ENCODE measurements at regions of chr1 and their contacts with region 1.

Region 1: DNA sequence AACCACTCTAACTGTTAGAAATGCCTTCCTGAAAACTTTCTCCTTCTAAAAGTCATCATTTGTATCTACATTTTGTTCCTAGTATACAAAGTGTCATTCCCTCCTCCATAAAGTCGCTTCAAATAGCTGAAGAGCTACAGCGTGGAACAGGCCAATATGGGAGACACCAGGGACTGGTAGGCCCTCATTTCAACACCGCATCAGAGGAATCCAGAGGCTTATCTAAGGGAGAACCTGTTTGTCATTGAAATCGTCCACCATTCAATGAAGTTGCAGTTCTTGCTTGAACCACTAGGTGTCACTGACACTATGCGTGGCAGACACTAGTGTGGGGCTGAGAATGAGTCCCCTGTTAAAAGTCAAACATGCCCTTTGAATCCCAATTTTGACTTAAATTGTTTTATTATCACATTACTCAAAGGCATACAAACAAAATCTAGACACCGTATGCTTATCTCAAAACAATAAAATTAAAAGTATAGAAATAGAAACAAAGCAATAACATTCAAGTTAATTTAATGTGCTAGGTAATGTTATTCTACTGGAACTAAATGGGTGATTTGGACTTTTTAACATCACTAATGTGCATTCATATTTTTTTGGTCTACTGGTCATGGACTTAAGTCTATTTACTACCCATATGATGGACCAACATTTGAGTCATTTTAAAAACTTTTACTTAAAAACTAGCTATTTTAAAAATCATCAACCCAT is 182.3 kb downstream of the FCRL5 start:
- DNase-seq: no peak
- H3K4me3 ChIP-seq: no peak overlapping the region
- H3K27me3 ChIP-seq: no peaks in the 10 kb centered on the region
- CTCF ChIP-seq: peak; percentile 86

Region 2: GRCh38 chr1:156659994-156660751 is 709.8 kb before region 1 on chr1:
- CTCF ChIA-PET with region 1: no interaction called
- POLR2A ChIA-PET with region 1: no interaction called
- DNase-seq: peak; percentile 85
- H3K4me3 ChIP-seq: no peak overlapping the region
- H3K27me3 ChIP-seq: peaks cover 18% of the 10 kb centered on the region
- CTCF ChIP-seq: peak; percentile 100

Region 3: DNA sequence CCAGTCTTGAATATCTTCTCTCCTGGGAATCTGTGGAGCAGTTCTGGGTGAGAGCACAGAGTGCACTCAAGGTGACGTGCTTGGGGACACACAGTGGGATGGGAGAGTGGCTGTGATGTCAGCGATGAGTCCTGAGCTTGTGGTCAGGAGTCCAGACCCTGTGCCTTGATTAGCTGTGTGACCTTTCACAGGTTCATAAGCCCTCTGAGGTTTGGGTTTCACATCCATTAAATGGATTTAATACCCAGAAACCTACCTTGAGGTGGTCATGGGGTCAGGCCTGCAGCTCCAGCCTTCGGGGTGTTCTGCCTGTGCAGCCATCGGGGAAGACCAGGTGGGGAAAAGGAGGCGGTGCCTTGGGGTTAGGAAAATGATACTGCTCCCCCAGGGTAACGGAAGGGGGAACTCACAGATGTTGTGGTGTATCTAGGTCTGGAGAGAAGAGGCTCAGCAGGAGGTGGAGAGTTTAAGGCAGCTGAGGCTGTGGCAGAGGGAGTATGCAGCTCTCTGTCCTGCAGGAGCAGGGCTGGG is 193.3 kb before region 1 on chr1:
- CTCF ChIA-PET with region 1: no interaction called
- POLR2A ChIA-PET with region 1: no interaction called
- DNase-seq: no peak
- H3K4me3 ChIP-seq: no peak overlapping the region
- H3K27me3 ChIP-seq: peaks cover 8% of the 10 kb centered on the region
- CTCF ChIP-seq: no peak

Region 4: DNA sequence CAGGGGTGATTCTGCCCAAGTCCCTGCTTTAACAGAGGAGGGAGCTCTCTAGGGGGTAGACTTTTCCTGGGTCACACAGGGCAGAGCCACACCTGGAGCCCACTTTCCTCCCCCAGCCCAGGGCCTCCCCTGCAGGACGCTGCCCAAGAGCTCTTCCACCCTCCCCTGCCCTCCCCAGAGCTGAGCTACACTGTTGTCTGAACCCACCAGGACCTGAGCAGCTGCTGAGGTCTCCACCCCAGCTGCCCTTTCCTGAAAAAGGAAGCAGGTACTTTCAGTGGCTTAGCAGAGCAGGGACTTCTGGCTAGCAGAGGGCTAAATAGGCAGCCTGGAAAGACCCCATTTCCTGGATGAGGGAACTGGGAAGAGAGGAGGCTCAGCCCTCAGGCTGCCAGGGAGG is 62.5 kb before region 1 on chr1:
- CTCF ChIA-PET with region 1: no interaction called
- POLR2A ChIA-PET with region 1: no interaction called
- DNase-seq: no peak
- H3K4me3 ChIP-seq: no peak overlapping the region
- H3K27me3 ChIP-seq: no peaks in the 10 kb centered on the region; the same call in 1 of the 2 replicates
- CTCF ChIP-seq: no peak

Region 5: DNA sequence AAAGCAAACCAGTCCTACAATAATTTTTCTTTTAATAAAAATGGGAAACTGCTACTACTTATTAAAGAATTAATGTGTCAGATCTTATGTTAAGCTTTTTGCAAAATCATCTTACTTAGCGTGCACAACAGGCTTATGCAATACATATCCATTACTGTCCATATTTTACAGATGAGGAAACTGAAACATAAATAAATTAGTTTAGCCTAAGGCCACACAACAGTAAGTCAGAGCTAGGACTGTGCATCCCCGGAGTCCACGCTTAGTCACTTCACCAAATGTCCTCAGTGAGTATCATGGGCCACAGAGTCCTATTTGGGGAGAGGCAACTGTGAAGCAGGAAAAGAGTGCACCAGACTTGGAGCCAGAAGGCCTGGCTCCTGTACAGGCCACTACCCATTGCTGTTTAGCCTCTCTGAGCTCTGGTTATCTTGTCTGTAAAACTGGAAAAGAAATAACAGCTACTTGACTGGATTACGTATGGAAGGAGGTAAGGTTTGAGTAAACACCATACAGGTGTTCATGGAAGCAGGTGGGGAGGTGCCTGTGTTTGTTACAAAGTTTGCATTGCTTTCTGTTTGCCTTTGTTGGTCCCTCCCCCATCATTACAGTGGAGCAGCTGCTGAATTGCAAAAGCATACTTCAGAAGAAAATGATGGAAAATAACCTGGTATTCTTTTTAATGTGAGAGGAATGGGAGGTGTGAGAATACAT is 10.5 kb before region 1 on chr1:
- CTCF ChIA-PET with region 1: interaction called, 14 read pairs
- POLR2A ChIA-PET with region 1: no interaction called
- DNase-seq: no peak
- H3K4me3 ChIP-seq: no peak overlapping the region
- H3K27me3 ChIP-seq: no peaks in the 10 kb centered on the region
- CTCF ChIP-seq: no peak

Region 6: DNA sequence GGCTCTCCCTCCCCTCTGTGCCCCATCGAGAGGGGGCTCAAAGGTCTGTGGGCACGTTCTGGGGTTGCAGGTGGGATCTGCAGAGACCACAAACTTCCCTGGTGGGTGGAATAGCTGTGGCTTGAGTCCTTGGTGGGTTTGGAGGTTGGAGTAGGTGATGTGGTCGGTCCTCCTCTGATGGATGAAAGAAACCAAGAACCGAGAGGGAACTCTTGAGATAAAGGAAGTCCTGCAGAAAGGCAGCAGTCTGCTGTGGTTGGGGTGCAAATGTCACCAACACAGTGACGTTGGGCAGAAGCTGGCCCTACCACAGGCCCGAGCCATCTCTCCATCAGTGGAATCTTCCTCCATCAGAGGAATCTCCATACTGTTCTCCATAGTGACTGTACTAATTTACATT is 10.6 kb after region 1 on chr1:
- CTCF ChIA-PET with region 1: interaction called, 17 read pairs
- POLR2A ChIA-PET with region 1: no interaction called
- DNase-seq: no peak
- H3K4me3 ChIP-seq: no peak overlapping the region
- H3K27me3 ChIP-seq: no peaks in the 10 kb centered on the region
- CTCF ChIP-seq: no peak

Region 7: DNA sequence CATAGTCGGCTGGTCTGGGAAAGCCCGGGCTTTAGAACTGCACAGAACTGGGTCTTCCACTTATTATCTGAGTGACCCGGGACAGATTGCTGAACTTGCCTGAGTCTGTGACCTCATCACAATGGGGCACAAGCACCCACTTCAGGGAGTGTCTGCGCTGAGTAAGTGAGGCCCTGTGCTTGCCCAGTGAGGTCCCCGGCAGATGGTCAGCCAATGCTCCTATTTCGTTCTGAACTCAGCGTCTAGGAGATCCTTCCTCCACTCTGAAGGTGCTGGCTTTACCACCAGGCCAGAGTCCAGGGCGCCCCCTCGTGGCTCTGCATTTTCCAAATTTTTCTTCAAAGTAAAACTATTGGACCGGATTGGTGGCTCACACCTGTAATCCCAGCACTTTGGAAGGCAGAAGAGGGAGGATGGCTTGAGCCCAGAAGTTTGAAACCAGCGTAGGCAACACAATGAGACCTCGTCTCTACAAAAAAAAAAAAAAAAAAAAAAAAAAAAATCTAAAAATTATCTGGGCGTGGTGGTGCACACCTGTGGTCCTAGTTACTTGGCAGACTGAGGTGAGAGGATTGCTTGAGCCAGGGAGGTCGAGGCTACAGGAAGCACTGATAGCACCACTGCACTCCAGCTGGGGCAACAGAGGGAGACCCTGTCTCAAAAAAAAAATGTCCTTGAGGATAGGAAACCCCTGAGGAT is 120.7 kb after region 1 on chr1:
- CTCF ChIA-PET with region 1: interaction called, 43 read pairs
- POLR2A ChIA-PET with region 1: no interaction called
- DNase-seq: no peak
- H3K4me3 ChIP-seq: no peak overlapping the region
- H3K27me3 ChIP-seq: no peaks in the 10 kb centered on the region
- CTCF ChIP-seq: peak; percentile 78

Region 8: DNA sequence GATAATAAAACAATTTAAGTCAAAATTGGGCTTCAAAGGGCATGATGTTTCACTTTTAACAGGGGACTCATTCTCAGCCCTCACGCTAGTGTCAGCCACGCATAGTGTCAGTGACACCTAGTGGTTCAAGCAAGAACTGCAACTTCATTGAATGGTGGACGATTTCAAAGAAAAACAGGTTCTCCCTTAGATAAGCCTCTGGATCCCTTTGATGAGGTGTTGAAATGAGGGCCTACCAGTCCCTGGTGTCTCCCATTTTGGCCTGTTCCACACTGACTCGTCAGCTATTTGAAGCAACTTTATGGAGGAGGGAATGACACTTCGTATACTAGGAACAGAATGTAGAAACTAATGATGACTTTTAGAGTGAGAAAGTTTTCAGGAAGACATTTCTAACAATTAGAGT is 126.2 kb after region 1 on chr1:
- CTCF ChIA-PET with region 1: interaction called, 26 read pairs
- POLR2A ChIA-PET with region 1: no interaction called
- DNase-seq: no peak
- H3K4me3 ChIP-seq: no peak overlapping the region
- H3K27me3 ChIP-seq: 0 out of 2 replicates have a peak, but pooled peaks cover 2% of the 10 kb centered on the region
- CTCF ChIP-seq: peak; percentile 88

Region 9: GRCh38 chr1:157505481-157506272 is 135.7 kb after region 1 on chr1:
- CTCF ChIA-PET with region 1: interaction called, 10 read pairs
- POLR2A ChIA-PET with region 1: no interaction called
- DNase-seq: no peak
- H3K4me3 ChIP-seq: no peak overlapping the region
- H3K27me3 ChIP-seq: no peaks in the 10 kb centered on the region
- CTCF ChIP-seq: peak; percentile 83